ENCODE measurements at regions of chr10 and their contacts with region 1.

Region 1: GRCh38 chr10:112232651-112233059 is 49.1 kb upstream of the GPAM start:
- DNase-seq: no peak
- ATAC-seq: no peak
- H3K4me3 Mint-ChIP-seq: no peak overlapping the region
- H3K27ac Mint-ChIP-seq: no peak overlapping the region
- H3K4me1 Mint-ChIP-seq: peaks cover 27% of the 10 kb centered on the region
- H3K27me3 Mint-ChIP-seq: no peaks in the 10 kb centered on the region
- CTCF ChIP-seq: no peak

Region 2: GRCh38 chr10:112215342-112215774 is 17.3 kb before region 1 on chr10:
- CTCF ChIA-PET with region 1: no interaction called
- POLR2A ChIA-PET with region 1: interaction called, 4 read pairs
- intact Hi-C with region 1: loop called (anchors 1 kb)
- DNase-seq: no peak
- ATAC-seq: peak; percentile 61
- H3K4me3 Mint-ChIP-seq: peak overlapping the region; percentile 33
- H3K27ac Mint-ChIP-seq: peak overlapping the region; percentile 79
- H3K4me1 Mint-ChIP-seq: peaks cover 39% of the 10 kb centered on the region
- H3K27me3 Mint-ChIP-seq: no peaks in the 10 kb centered on the region
- CTCF ChIP-seq: no peak